ENCODE measurements at regions of chr14 and their contacts with region 1.

Region 1: GRCh38 chr14:69242311-69243224 is 17.4 kb upstream of the GALNT16 start:
- DNase-seq: peak; percentile 73
- ATAC-seq: peak; percentile 65
- H3K4me3 ChIP-seq: no peak overlapping the region
- H3K4me3 Mint-ChIP-seq: no peak overlapping the region
- H3K27ac ChIP-seq: no peak overlapping the region
- H3K27ac Mint-ChIP-seq: no peak overlapping the region
- H3K4me1 ChIP-seq: no peaks in the 10 kb centered on the region
- H3K4me1 Mint-ChIP-seq: peaks cover 3% of the 10 kb centered on the region
- H3K27me3 ChIP-seq: no peaks in the 10 kb centered on the region
- H3K27me3 Mint-ChIP-seq: no peaks in the 10 kb centered on the region
- CTCF ChIP-seq: peak; percentile 87

Region 2: GRCh38 chr14:69260861-69261564 is 18.4 kb after region 1 on chr14:
- CTCF ChIA-PET with region 1: interaction called, 12 read pairs
- POLR2A ChIA-PET with region 1: no interaction called
- intact Hi-C with region 1: no loop called
- DNase-seq: peak; percentile 60
- ATAC-seq: peak; percentile 79
- H3K4me3 ChIP-seq: peak overlapping the region in 3 of 5 experiments; percentile 18 to 50 (median 37)
- H3K4me3 Mint-ChIP-seq: peak overlapping the region; percentile 78
- H3K27ac ChIP-seq: no peak overlapping the region
- H3K27ac Mint-ChIP-seq: no peak overlapping the region
- H3K4me1 ChIP-seq: peaks cover 12 to 24% of the 10 kb centered on the region in 2 donors
- H3K4me1 Mint-ChIP-seq: peaks cover 14% of the 10 kb centered on the region
- H3K27me3 ChIP-seq: peaks cover 0 to 75% (median 19%) of the 10 kb centered on the region in 4 experiments
- H3K27me3 Mint-ChIP-seq: peaks cover 58% of the 10 kb centered on the region
- CTCF ChIP-seq: peak; percentile 65

Region 3: GRCh38 chr14:69325646-69326265 is 83.2 kb after region 1 on chr14:
- CTCF ChIA-PET with region 1: no interaction called
- POLR2A ChIA-PET with region 1: no interaction called
- intact Hi-C with region 1: no loop called
- DNase-seq: no peak
- ATAC-seq: no peak
- H3K4me3 ChIP-seq: no peak overlapping the region
- H3K4me3 Mint-ChIP-seq: no peak overlapping the region
- H3K27ac ChIP-seq: no peak overlapping the region
- H3K27ac Mint-ChIP-seq: no peak overlapping the region
- H3K4me1 ChIP-seq: no peaks in the 10 kb centered on the region
- H3K4me1 Mint-ChIP-seq: no peaks in the 10 kb centered on the region
- H3K27me3 ChIP-seq: no peaks in the 10 kb centered on the region
- H3K27me3 Mint-ChIP-seq: peaks cover 3% of the 10 kb centered on the region
- CTCF ChIP-seq: no peak

Region 4: DNA sequence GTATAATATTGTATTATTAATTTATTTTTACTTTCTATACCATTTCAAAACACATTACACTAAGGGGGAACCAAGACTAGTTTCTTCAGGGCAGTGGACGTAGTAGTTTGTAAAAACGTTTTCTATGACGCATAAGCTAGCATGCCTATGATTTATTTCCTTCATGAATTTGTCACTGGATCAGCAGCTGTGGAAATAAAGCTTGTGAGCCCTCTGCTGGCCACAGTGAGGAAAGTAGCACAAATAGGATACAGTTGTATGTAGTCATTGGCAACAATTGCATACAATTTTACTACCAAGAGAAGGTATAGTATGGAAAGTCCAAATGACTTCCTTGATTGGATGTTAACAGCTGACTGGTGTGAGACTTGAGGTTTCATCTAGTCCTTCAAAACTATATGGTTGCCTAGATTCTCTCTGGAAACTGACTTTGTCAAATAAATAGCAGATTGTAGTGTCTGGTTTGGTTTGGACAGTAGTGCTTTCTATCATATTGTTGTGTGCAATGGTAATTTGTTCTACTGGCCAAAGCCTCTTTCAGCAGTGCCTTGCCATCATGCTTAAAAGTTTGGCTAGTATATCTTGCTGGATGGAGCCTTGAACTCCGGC is 217.6 kb after region 1 on chr14:
- CTCF ChIA-PET with region 1: interaction called, 110 read pairs
- POLR2A ChIA-PET with region 1: no interaction called
- intact Hi-C with region 1: loop called (anchors 1 kb)
- DNase-seq: peak; percentile 72
- ATAC-seq: peak; percentile 95
- H3K4me3 ChIP-seq: no peak overlapping the region
- H3K4me3 Mint-ChIP-seq: no peak overlapping the region
- H3K27ac ChIP-seq: no peak overlapping the region
- H3K27ac Mint-ChIP-seq: no peak overlapping the region
- H3K4me1 ChIP-seq: no peaks in the 10 kb centered on the region
- H3K4me1 Mint-ChIP-seq: peaks cover 3% of the 10 kb centered on the region
- H3K27me3 ChIP-seq: no peaks in the 10 kb centered on the region
- H3K27me3 Mint-ChIP-seq: no peaks in the 10 kb centered on the region
- CTCF ChIP-seq: peak; percentile 80

Region 5: DNA sequence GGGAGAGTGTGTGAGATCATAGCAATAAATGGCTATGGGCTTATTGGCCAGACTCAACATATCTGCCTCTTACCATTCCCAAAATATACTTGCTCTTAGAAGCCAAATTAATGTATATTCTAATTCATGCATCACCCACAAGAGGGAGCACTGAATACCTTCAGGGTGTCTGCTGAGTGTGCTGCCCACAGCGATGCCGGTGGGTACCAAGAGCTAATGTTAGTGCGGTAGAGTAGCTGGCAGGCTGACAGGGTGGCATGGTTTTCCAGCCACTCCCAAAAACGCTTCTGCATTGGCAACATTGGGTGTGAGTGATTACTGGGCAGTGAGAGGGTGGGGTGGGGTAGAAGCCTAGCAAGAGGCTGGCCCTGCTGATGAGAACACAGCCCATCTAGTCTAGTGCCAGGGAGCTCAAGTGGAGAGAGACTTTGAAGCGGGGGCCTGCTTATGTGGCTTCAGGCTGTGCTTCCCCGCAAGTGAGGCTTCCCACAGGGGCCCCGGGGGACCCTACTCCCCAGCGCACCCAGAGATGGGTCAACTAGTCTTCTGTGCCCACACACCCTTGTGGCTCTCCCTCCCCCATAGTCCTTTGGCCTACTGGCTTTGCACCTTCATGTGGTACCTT is 232.7 kb after region 1 on chr14:
- CTCF ChIA-PET with region 1: interaction called, 4 read pairs
- POLR2A ChIA-PET with region 1: no interaction called
- intact Hi-C with region 1: loop called (anchors 5 kb)
- DNase-seq: no peak
- ATAC-seq: peak; percentile 24
- H3K4me3 ChIP-seq: no peak overlapping the region
- H3K4me3 Mint-ChIP-seq: no peak overlapping the region
- H3K27ac ChIP-seq: no peak overlapping the region
- H3K27ac Mint-ChIP-seq: no peak overlapping the region
- H3K4me1 ChIP-seq: no peaks in the 10 kb centered on the region
- H3K4me1 Mint-ChIP-seq: no peaks in the 10 kb centered on the region
- H3K27me3 ChIP-seq: peaks cover 0 to 9% (median 2%) of the 10 kb centered on the region in 4 experiments
- H3K27me3 Mint-ChIP-seq: peaks cover 36% of the 10 kb centered on the region
- CTCF ChIP-seq: peak; percentile 23

Measured in B cell (primary cell).